Mammary epithelial cell (primary cell): ENCODE measurements at regions of chr7 and their contacts with region 1.

Region 1: GRCh38 chr7:114819616-114820362 is 102.1 kb upstream of the MDFIC start:
- DNase-seq: peak; percentile 99
- H3K4me3 ChIP-seq: no peak overlapping the region
- H3K27ac ChIP-seq: peak overlapping the region; percentile 93
- H3K4me1 ChIP-seq: peaks cover 33% of the 10 kb centered on the region
- H3K27me3 ChIP-seq: no peaks in the 10 kb centered on the region
- CTCF ChIP-seq: no peak

Region 2: GRCh38 chr7:114765331-114766040 is 54.3 kb before region 1 on chr7:
- CTCF ChIA-PET with region 1: no interaction called
- dilution Hi-C with region 1: no loop called
- in situ Hi-C with region 1: no loop called
- intact Hi-C with region 1: loop called (anchors 2 kb)
- DNase-seq: peak; percentile 33
- H3K4me3 ChIP-seq: no peak overlapping the region
- H3K27ac ChIP-seq: no peak overlapping the region
- H3K4me1 ChIP-seq: peaks cover 6% of the 10 kb centered on the region
- H3K27me3 ChIP-seq: no peaks in the 10 kb centered on the region
- CTCF ChIP-seq: no peak

Region 3: GRCh38 chr7:114789871-114790311 is 29.9 kb before region 1 on chr7:
- CTCF ChIA-PET with region 1: no interaction called
- dilution Hi-C with region 1: no loop called
- in situ Hi-C with region 1: no loop called
- intact Hi-C with region 1: no loop called
- DNase-seq: peak; percentile 82
- H3K4me3 ChIP-seq: no peak overlapping the region
- H3K27ac ChIP-seq: no peak overlapping the region
- H3K4me1 ChIP-seq: peaks cover 32% of the 10 kb centered on the region
- H3K27me3 ChIP-seq: no peaks in the 10 kb centered on the region
- CTCF ChIP-seq: no peak